SK-N-SH (cell line): ENCODE measurements at regions of chr16 and their contacts with region 1.

Region 1: DNA sequence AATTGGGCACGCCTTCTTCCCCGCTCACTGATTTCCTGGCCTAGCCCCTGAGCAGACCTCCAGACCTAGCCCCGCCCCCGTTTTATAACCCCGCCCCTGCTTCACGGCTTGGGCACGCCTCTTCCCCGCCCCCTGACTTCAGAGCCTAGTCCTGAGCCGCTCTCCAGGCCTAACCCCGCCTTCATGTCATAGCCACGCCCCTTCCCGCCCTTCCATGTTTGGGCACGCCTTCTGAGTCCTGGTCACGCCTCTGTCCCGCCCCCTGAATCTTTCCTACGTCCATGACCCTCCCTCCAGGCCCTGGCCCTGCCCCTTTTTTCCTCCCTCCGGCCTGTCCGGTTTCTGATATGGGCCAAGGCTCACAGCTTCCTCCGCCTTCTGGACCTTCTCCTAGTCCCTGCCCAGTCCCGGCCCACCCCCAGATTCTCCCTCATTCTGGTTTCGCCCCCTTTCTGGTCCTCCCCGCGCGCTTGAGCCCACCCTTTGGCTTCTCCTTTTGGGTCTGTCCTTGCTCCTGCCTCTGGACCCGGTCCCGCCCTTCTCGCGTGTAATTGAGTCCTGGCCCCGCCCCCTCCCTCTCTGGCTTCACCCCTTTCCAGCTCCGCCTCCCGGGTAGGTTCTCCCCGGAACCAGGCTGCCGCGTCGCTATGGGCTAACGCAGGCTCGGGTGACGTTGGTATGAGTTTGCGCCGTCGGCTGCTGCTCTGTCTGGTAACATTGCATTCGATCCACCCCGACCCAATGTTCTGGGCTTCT is 15.1 kb upstream of the EEF2K start:
- DNase-seq: peak; percentile 83
- H3K4me3 ChIP-seq: peak overlapping the region; percentile 58 to 62
- H3K27ac ChIP-seq: peak overlapping the region; percentile 85
- H3K4me1 ChIP-seq: peaks cover 3 to 26% of the 10 kb centered on the region in 2 experiments; a peak in 2 of 4 replicates
- H3K27me3 ChIP-seq: no peaks in the 10 kb centered on the region
- CTCF ChIP-seq: no peak
- EP300 ChIP-seq: no peak
- RAD21 ChIP-seq: no peak

Region 2: GRCh38 chr16:21952793-21953540 is 238.0 kb before region 1 on chr16 and contains the start of gene UQCRC2:
- CTCF ChIA-PET with region 1: interaction called, 25 read pairs
- POLR2A ChIA-PET with region 1: interaction called, 3 read pairs
- DNase-seq: peak; percentile 86
- H3K4me3 ChIP-seq: peak within 1 kb of the TSS; percentile 95 to 97
- H3K27ac ChIP-seq: peak within 1 kb of the TSS; percentile 84 to 97
- H3K4me1 ChIP-seq: peaks cover 11 to 15% of the 10 kb centered on the region in 2 experiments; a peak in 3 of 4 replicates
- H3K27me3 ChIP-seq: no peaks in the 10 kb centered on the region
- CTCF ChIP-seq: no peak
- EP300 ChIP-seq: peak in 1 of 2 experiments; percentile 57; a peak in 1 of 4 replicates
- RAD21 ChIP-seq: no peak
- polyA plus RNA-seq, gene UQCRC2: 155 and 220 TPM in 2 replicates

Region 3: DNA sequence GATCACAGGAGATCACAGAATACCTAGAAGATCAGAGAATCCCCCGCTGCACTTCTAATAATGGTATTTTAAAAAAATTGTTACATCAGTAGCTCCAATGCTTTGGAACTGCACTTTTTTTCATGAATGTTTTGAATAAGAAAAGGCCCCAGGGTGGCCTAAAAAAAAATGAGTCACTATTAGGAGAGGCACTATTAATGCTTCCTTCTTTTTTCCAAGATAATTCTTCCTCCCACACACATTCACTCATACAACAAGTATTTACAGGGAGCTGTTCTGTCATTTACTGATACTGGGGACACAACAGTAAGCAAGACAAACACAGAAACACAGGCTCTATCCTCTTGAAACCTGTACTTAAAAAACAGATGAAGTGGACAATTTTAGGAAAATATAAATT is 189.4 kb before region 1 on chr16:
- CTCF ChIA-PET with region 1: interaction called, 74 read pairs
- POLR2A ChIA-PET with region 1: interaction called, 3 read pairs
- DNase-seq: no peak
- H3K4me3 ChIP-seq: no peak overlapping the region
- H3K27ac ChIP-seq: no peak overlapping the region
- H3K4me1 ChIP-seq: peaks cover 0 to 4% of the 10 kb centered on the region in 2 experiments; a peak in 1 of 4 replicates
- H3K27me3 ChIP-seq: no peaks in the 10 kb centered on the region
- CTCF ChIP-seq: no peak
- EP300 ChIP-seq: no peak
- RAD21 ChIP-seq: no peak

Region 4: GRCh38 chr16:22098405-22099255 is 92.3 kb before region 1 on chr16:
- CTCF ChIA-PET with region 1: interaction called, 19 read pairs
- POLR2A ChIA-PET with region 1: no interaction called
- DNase-seq: peak; percentile 71
- H3K4me3 ChIP-seq: no peak overlapping the region; a peak in 1 of 4 replicates
- H3K27ac ChIP-seq: no peak overlapping the region
- H3K4me1 ChIP-seq: no peaks in the 10 kb centered on the region; a peak in 1 of 4 replicates
- H3K27me3 ChIP-seq: no peaks in the 10 kb centered on the region; the same call in 1 of the 2 replicates
- CTCF ChIP-seq: peak; percentile 66
- EP300 ChIP-seq: no peak
- RAD21 ChIP-seq: peak; percentile 75

Region 5: DNA sequence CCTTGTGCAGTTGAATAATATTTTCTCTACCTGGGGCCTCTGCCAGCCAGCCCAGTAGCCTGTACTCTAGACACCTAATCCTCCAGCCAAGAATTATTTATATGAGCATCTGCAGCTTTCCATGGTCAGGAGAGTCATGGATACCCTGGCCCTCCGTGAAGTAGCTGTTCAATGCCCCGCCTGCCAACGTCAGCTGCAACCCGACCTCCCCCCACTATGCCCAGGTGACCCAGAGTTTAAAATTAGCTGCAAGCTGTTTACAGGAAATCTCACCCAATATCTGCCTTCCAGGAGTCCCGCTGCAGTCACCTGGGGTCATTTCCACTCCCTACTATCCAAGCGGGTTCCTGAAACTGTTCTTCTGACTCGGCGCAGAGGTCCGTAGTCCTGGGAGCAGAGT is 16.3 kb before region 1 on chr16:
- CTCF ChIA-PET with region 1: interaction called, 18 read pairs
- POLR2A ChIA-PET with region 1: no interaction called
- DNase-seq: no peak
- H3K4me3 ChIP-seq: no peak overlapping the region
- H3K27ac ChIP-seq: no peak overlapping the region
- H3K4me1 ChIP-seq: no peaks in the 10 kb centered on the region
- H3K27me3 ChIP-seq: no peaks in the 10 kb centered on the region
- CTCF ChIP-seq: no peak
- EP300 ChIP-seq: no peak
- RAD21 ChIP-seq: no peak

Region 6: DNA sequence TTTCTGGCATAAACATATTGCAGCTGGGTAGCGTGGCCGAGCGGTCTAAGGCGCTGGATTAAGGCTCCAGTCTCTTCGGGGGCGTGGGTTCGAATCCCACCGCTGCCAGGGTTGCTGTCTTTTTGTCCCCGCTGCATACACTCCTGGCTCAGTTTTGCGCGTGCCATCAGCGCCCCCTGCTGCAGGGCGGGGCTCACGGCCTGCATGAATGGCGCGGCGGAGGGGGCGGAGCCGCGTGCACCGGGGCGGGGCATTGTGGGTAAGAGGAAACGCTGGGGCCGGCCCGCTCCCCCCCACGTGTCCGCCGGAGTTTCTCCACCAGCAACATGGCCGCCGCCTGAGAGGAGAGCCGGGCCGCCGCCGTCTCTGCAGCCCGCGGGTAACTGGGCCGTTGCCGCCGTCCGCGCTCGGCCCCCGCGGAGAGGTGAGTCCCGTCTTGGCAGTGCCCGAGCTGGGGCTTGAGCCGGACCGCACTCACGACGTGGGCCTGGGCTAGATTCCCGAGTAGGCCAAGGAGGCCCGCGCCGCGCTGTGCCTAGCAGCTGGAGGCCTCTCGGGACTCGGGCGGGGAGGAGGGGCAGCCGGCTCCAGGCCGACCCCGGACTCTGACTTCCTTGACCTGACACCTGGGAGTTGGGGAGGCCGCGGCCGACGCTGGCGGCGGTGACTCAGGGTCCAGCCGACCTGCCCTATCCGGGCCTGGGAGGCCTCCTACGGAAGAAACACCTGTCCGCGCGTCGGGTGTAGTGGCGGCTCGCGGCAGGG is 106.3 kb after region 1 on chr16 and contains the start of gene POLR3E:
- CTCF ChIA-PET with region 1: interaction called, 115 read pairs
- POLR2A ChIA-PET with region 1: interaction called, 4 read pairs
- DNase-seq: peak; percentile 96
- H3K4me3 ChIP-seq: peak within 1 kb of the TSS; percentile 78 to 84
- H3K27ac ChIP-seq: peak within 1 kb of the TSS; percentile 85 to 90
- H3K4me1 ChIP-seq: peaks cover 0 to 9% of the 10 kb centered on the region in 2 experiments; a peak in 1 of 4 replicates
- H3K27me3 ChIP-seq: no peaks in the 10 kb centered on the region
- CTCF ChIP-seq: peak; percentile 88
- EP300 ChIP-seq: peak in 1 of 2 experiments; percentile 54; a peak in 1 of 4 replicates
- RAD21 ChIP-seq: peak; percentile 87
- polyA plus RNA-seq, gene POLR3E: 57.4 and 59.6 TPM in 2 replicates